Left ventricle myocardium inferior (tissue), 1 donor: ENCODE measurements at regions of chr5 and their contacts with region 1.

Region 1: DNA sequence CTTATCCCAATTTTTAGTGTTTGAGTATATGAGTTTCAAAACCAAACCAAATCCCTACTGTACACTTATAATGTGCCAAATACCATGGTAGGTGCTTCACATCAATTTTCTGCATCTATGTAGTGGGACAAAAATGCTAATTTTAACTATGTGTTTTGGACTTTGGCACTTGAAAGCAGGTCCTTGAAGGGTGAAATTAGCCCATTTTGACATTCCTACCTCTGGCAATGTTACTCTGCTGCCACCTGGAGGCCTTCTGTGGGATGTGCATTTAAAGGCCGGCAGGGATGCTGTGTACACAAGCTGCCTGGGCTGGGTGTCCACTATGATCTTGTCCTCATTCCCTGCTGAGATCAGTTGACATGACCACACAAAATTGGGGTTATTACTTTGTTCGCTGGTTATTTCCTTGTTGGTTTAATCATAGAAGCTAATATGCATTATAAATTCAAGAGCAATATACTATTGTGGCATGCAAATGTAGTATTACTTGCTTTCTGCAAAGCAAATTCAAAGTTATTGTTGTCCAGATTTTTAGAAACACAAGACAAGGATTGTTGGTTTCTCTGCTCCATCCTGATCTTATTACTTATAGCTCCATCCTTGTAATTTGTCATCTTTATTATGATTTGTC is 166.8 kb downstream of the ARHGEF28 start:
- DNase-seq: peak; percentile 61
- H3K4me3 ChIP-seq: no peak overlapping the region
- H3K27ac ChIP-seq: no peak overlapping the region
- H3K4me1 ChIP-seq: peaks cover 29% of the 10 kb centered on the region
- H3K27me3 ChIP-seq: peaks cover 12% of the 10 kb centered on the region
- CTCF ChIP-seq: peak; percentile 99

Region 2: GRCh38 chr5:73591102-73591695 is 201.6 kb before region 1 on chr5:
- intact Hi-C with region 1: loop called (anchors 2 kb)
- DNase-seq: no peak
- H3K4me3 ChIP-seq: no peak overlapping the region
- H3K27ac ChIP-seq: no peak overlapping the region
- H3K4me1 ChIP-seq: no peaks in the 10 kb centered on the region
- H3K27me3 ChIP-seq: no peaks in the 10 kb centered on the region
- CTCF ChIP-seq: peak; percentile 92

Region 3: GRCh38 chr5:73892806-73893205 is 100.0 kb after region 1 on chr5:
- intact Hi-C with region 1: no loop called
- DNase-seq: no peak
- H3K4me3 ChIP-seq: no peak overlapping the region
- H3K27ac ChIP-seq: no peak overlapping the region
- H3K4me1 ChIP-seq: peaks cover 4% of the 10 kb centered on the region
- H3K27me3 ChIP-seq: no peaks in the 10 kb centered on the region
- CTCF ChIP-seq: no peak

Region 4: DNA sequence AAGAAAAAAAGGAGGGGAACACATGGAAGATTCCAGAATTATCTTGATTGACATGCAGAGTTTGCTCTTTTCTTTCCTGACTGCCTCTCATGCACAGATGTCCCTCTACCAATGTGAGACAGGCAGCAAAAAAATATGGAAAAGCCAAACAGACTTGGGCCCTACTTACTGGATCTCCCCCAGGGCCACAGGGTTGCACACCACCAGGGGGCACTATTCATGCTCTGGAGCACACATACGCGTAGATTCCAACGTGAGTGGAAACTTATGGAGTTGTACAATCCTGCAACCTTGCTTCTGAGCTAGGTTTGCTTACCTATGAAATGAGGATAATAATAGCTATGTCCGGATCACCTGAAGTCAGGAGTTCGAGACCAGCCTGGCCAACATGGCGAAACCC is 152.7 kb after region 1 on chr5:
- intact Hi-C with region 1: no loop called
- DNase-seq: no peak
- H3K4me3 ChIP-seq: no peak overlapping the region
- H3K27ac ChIP-seq: no peak overlapping the region
- H3K4me1 ChIP-seq: peaks cover 13% of the 10 kb centered on the region
- H3K27me3 ChIP-seq: no peaks in the 10 kb centered on the region
- CTCF ChIP-seq: peak; percentile 21

Region 5: GRCh38 chr5:74640450-74640953 is 847.7 kb after region 1 on chr5 and contains the start of gene ENC1:
- intact Hi-C with region 1: loop called (anchors 10 kb)
- DNase-seq: peak; percentile 89
- H3K4me3 ChIP-seq: peak within 1 kb of the TSS; percentile 89
- H3K27ac ChIP-seq: peak within 1 kb of the TSS; percentile 94
- H3K4me1 ChIP-seq: peaks cover 83% of the 10 kb centered on the region
- H3K27me3 ChIP-seq: no peaks in the 10 kb centered on the region
- CTCF ChIP-seq: peak; percentile 76
- total RNA-seq, gene ENC1: 3.8 TPM